ENCODE measurements at regions of chr10 and their contacts with region 1.

Region 1: GRCh38 chr10:29496341-29497162 is 138.2 kb downstream of the SVIL start:
- DNase-seq: peak; percentile 66 to 82
- ATAC-seq: peak; percentile 55 to 80 (median 74)
- H3K4me3 ChIP-seq: no peak overlapping the region
- H3K27ac ChIP-seq: no peak overlapping the region
- H3K4me1 ChIP-seq: peaks cover 0 to 5% (median 0%) of the 10 kb centered on the region in 9 donors
- H3K27me3 ChIP-seq: no peaks in the 10 kb centered on the region
- CTCF ChIP-seq: peak; percentile 86 to 97 (median 92)

Region 2: DNA sequence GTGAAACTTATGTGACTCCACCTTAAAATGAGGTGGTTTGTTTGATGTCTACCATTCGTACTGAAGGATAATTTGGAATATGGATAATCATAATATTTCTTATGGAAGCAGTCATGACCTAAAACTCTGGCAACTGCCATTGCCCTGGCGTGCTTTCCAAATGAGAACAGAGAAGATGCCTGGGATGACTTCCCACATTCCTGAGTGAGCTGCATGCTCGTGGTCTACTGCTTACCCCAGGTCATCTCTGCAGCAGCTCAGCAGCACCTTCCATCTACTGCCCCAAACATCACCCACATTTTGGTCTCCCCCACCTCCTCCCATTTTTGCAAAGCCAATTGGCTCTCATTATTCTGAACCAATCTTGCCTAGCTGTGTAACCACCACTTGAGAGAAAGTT is 167.6 kb before region 1 on chr10:
- intact Hi-C with region 1: no loop called
- DNase-seq: peak in 1 of 2 donors; percentile 66
- ATAC-seq: peak; percentile 77 to 95 (median 90)
- H3K4me3 ChIP-seq: no peak overlapping the region
- H3K27ac ChIP-seq: peak overlapping the region in 8 of 10 donors; percentile 21 to 86 (median 72)
- H3K4me1 ChIP-seq: peaks cover 0 to 27% (median 5%) of the 10 kb centered on the region in 9 donors
- H3K27me3 ChIP-seq: no peaks in the 10 kb centered on the region
- CTCF ChIP-seq: no peak

Region 3: GRCh38 chr10:29386342-29386999 is 110.1 kb before region 1 on chr10:
- intact Hi-C with region 1: loop called in 2 of 10 experiments (anchors 5 kb)
- DNase-seq: no peak
- ATAC-seq: peak in 2 of 8 donors; percentile 16 to 48
- H3K4me3 ChIP-seq: no peak overlapping the region
- H3K27ac ChIP-seq: no peak overlapping the region
- H3K4me1 ChIP-seq: peaks cover 0 to 5% (median 0%) of the 10 kb centered on the region in 9 donors
- H3K27me3 ChIP-seq: no peaks in the 10 kb centered on the region
- CTCF ChIP-seq: peak; percentile 52 to 83 (median 80)

Region 4: GRCh38 chr10:29392376-29393021 is 104.1 kb before region 1 on chr10:
- intact Hi-C with region 1: loop called in 2 of 10 experiments (anchors 5 kb)
- DNase-seq: peak in 1 of 2 donors; percentile 15
- ATAC-seq: peak in 2 of 8 donors; percentile 42 to 67
- H3K4me3 ChIP-seq: no peak overlapping the region
- H3K27ac ChIP-seq: no peak overlapping the region
- H3K4me1 ChIP-seq: no peaks in the 10 kb centered on the region
- H3K27me3 ChIP-seq: no peaks in the 10 kb centered on the region
- CTCF ChIP-seq: peak; percentile 55 to 83 (median 74)

Region 5: GRCh38 chr10:29409241-29410057 is 87.1 kb before region 1 on chr10:
- intact Hi-C with region 1: loop called in 1 of 10 experiments (anchors 2 kb)
- DNase-seq: peak; percentile 79 to 82
- ATAC-seq: peak; percentile 95 to 98 (median 97)
- H3K4me3 ChIP-seq: peak overlapping the region; percentile 48 to 89 (median 76)
- H3K27ac ChIP-seq: peak overlapping the region; percentile 83 to 98 (median 92)
- H3K4me1 ChIP-seq: peaks cover 0 to 50% (median 47%) of the 10 kb centered on the region in 9 donors
- H3K27me3 ChIP-seq: no peaks in the 10 kb centered on the region
- CTCF ChIP-seq: peak in 4 of 9 donors; percentile 6 to 36 (median 28)

Region 6: DNA sequence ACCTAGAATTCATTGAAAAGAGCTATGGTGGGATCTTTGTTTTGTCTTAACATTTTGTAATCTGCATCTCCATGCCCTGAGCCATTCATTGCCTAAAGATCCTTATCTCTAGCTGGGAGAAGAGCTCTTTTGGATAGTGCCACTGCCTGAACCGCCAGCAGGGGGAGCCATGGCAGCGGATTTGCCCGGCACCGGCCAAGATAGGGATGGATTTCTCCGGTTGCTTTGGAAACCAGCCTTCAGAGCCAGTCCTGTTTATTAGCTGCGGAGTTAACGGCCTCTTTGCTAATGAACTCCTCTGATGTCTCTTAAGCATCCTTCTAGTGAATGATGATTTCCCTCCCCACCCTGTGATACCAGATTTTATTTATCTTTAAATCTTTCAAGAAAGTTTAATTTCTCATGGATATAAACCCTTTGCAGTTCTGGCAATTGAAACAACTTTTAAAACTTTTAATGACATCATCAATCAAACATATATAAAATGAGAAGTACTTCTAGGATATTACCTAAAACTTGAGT is 1191.2 kb after region 1 on chr10:
- intact Hi-C with region 1: loop called in 1 of 10 experiments (anchors 10 kb)
- DNase-seq: peak; percentile 58 to 79
- ATAC-seq: peak; percentile 50 to 88 (median 69)
- H3K4me3 ChIP-seq: no peak overlapping the region
- H3K27ac ChIP-seq: no peak overlapping the region
- H3K4me1 ChIP-seq: peaks cover 0 to 4% (median 0%) of the 10 kb centered on the region in 9 donors
- H3K27me3 ChIP-seq: peaks cover 0 to 39% (median 17%) of the 10 kb centered on the region in 7 donors
- CTCF ChIP-seq: peak; percentile 72 to 91 (median 84)